Heart right ventricle (tissue), 16 donors: ENCODE measurements at regions of chr15 and their contacts with region 1.

Region 1: DNA sequence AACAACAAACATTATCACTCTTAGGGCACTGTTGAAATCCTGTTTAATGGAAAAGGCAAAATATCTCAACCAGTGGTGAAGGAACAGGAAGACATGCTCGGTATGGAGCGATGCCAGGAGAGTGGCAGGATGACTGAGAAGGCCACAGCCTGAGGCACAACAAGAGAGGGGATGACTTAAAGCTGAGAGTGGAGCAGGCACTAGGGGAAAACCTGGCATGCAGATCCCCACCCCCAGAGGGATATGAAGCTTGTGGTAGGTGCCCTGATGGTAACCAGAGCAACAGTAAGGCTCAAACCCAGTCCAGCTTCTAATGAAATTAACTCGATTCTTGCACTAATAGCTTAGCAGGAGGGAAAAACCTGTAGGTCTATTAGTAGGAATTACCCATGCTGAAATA is 40.4 kb downstream of the LYSMD4 start:
- DNase-seq: no peak
- ATAC-seq: peak in 4 of 8 donors; percentile 6 to 27 (median 20)
- H3K4me3 ChIP-seq: no peak overlapping the region
- H3K27ac ChIP-seq: peak overlapping the region in 3 of 10 donors; percentile 2 to 44 (median 31)
- H3K4me1 ChIP-seq: peaks cover 0 to 26% (median 10%) of the 10 kb centered on the region in 9 donors
- H3K27me3 ChIP-seq: no peaks in the 10 kb centered on the region
- CTCF ChIP-seq: no peak

Region 2: DNA sequence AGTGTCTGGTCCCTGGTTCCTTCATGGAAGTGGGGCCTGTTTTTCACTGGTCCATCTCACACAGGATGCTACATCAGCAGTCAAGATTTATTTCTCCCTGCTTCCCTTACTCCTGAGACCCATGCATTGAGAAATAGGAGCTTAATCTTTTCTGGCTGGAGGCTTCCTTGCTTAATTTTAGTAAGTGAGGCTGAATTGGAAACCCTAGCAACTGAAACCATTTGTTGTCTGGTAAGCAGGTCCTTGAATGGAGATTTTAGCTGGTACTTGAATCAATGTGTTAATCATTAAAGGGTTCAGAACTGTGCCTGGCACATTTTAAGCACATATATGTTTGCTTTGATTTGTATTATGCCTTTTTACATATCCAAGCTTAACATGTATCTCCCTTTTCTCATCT is 147.2 kb before region 1 on chr15:
- intact Hi-C with region 1: no loop called
- DNase-seq: no peak
- ATAC-seq: no peak
- H3K4me3 ChIP-seq: no peak overlapping the region
- H3K27ac ChIP-seq: no peak overlapping the region
- H3K4me1 ChIP-seq: no peaks in the 10 kb centered on the region
- H3K27me3 ChIP-seq: no peaks in the 10 kb centered on the region
- CTCF ChIP-seq: no peak

Region 3: DNA sequence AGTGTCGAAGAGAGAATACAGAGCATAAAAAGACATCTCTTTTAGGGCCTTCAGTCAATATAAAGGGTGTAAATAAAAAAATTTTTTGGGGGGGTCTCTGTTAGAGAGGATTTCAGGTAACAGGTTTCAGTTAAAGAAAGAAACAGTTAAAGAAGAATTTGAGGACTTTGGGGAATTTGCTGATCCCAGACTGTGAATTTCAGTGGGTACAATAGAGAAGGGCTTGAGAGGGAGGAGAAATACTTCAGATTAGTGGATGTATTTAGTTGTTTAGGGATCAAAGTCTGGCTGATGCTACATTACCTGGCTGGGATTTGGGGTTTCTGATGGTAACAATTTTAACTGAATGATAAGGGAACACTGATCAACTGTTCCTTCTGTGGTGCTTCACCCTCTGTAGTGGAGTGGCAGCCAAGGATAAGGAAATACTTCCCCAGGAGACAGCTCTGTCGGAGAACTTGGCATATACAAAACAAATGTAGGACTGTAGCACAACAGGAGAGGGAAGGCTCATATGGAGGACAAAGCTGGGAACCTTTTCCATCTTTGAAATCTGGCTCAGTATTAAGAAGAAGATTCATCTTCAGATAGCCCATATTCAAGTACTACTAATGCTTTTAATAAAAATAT is 47.8 kb before region 1 on chr15:
- intact Hi-C with region 1: loop called in 1 of 10 experiments (anchors 5 kb)
- DNase-seq: no peak
- ATAC-seq: peak in 5 of 8 donors; percentile 34 to 76 (median 67)
- H3K4me3 ChIP-seq: no peak overlapping the region
- H3K27ac ChIP-seq: peak overlapping the region in 1 of 10 donors; percentile 19
- H3K4me1 ChIP-seq: peaks cover 0 to 46% (median 25%) of the 10 kb centered on the region in 9 donors
- H3K27me3 ChIP-seq: no peaks in the 10 kb centered on the region
- CTCF ChIP-seq: no peak